Heart right ventricle (tissue), 16 donors: ENCODE measurements at regions of chr15 and their contacts with region 1.

Region 1: DNA sequence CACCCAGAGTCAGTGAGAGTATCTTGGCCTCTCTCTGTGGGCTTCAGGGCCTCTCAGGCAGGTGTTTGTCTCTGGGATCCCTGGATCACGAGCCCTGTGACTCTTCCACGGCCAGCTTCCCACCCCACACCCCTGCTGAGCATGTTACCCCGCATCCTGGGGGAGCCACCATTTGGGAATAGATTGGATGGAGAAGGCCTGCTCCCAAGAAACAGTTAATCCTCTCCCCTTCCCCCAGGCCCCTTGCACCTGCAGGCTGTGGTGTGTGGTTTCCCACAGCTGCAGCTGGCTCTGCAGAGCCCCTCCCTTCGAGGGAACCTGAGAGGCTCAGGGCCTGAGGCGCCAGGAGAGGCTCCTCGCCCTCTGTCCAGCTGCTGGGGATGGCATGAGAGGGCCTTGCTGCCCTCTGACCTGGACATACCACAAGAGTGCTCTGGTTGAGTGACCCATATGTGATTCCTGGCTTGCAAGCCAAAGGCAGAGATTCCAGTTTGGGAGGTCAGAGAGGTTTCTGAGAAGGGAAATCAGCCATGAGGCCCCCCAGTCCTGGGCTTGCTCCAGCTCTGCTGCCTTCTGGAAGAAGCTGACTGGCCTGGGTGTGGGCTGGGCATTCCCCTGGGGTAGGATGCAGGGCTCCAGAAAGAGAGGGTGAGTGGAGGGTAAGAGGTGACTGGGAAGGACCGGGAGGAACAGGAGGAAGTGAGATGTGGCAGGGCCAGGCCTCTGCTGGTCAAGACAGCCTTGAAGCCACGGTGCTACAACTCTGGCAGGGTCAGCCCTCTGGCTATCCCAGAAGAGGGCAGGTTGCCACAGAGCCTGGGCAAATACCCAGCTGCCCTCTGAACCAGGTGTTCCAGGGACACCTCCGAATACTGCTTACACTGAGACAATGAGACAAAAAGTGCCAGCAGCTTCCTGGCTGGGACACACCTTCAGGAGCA is 15.9 kb upstream of the SRP14 start:
- DNase-seq: no peak
- ATAC-seq: peak in 4 of 8 donors; percentile 7 to 22 (median 10)
- H3K4me3 ChIP-seq: no peak overlapping the region
- H3K27ac ChIP-seq: peak overlapping the region in 3 of 10 donors; percentile 17 to 39 (median 31)
- H3K4me1 ChIP-seq: peaks cover 7 to 67% (median 14%) of the 10 kb centered on the region in 9 donors
- H3K27me3 ChIP-seq: no peaks in the 10 kb centered on the region
- CTCF ChIP-seq: no peak

Region 2: DNA sequence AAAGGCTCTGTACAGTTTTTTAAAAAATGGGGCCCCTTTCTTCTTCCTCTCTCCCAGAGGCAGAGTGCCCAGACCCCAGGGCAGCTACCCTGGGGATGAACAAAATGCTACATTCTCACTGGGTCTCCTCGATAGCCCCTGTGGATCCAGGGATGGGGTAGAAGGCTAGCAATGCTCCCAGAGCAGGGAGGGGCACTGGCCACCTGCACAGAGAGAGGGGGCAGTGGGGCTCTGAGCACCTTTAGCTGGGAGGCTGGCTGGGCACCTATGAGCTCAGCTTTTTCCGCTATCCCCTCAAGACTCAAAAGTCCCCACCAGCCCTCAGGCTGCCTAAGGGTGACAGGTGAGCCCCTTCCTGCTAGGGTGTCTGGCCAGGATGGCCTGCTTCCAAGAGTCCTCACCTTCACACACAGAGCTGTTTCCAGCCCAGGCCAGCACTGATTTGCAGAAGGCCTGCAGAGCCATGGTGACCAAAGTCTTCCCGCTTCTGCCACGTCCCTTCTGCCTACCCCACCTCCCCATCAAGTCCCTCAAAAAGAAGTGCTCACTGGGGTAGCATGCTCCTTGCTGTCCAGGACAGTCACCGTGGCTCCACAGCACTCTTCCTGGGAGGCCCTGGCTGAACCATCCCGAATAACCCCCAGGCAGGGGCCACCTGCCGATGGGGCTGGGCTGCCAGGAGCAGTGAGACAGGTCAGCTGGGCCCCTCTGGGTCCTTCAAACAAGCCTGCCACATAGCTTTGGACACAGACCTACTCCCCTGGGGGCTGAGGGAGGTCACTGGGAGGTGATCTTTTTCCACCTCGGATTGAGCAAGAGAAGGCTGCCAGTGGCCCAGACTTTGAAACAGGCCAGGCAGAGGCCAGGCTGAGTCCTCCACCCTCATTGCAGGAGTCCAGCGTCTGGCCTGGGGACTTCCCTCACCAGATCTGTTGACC is 33.4 kb after region 1 on chr15:
- intact Hi-C with region 1: loop called in 1 of 10 experiments (anchors 5 kb)
- DNase-seq: peak in 1 of 2 donors; percentile 57
- ATAC-seq: peak in 4 of 8 donors; percentile 16 to 68 (median 20)
- H3K4me3 ChIP-seq: no peak overlapping the region
- H3K27ac ChIP-seq: peak overlapping the region in 3 of 10 donors; percentile 2 to 30 (median 24)
- H3K4me1 ChIP-seq: peaks cover 19 to 72% (median 44%) of the 10 kb centered on the region in 9 donors
- H3K27me3 ChIP-seq: no peaks in the 10 kb centered on the region
- CTCF ChIP-seq: no peak

Region 3: DNA sequence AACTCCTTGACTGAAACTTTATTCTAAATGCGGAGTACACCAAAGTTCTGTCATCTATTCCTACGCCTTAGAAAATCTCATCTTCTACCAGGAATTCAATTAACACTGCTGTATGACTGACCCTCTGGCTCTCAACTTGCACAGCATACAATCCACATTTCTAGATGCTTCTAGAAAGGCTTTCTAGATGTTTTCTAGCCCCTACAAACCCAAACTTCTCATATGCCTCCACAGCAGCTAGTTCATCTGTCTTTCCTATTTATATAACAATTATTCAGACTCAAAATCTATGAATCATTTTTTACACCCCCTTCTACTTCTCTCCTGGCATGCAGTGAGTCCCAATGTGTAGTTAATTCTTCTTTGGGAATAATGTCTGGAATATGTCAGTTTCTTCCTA is 1048.0 kb after region 1 on chr15:
- intact Hi-C with region 1: no loop called
- DNase-seq: no peak
- ATAC-seq: no peak
- H3K4me3 ChIP-seq: no peak overlapping the region
- H3K27ac ChIP-seq: no peak overlapping the region
- H3K4me1 ChIP-seq: peaks cover 0 to 14% (median 0%) of the 10 kb centered on the region in 9 donors
- H3K27me3 ChIP-seq: no peaks in the 10 kb centered on the region
- CTCF ChIP-seq: no peak